ENCODE measurements at regions of chr10 and their contacts with region 1.

Region 1: DNA sequence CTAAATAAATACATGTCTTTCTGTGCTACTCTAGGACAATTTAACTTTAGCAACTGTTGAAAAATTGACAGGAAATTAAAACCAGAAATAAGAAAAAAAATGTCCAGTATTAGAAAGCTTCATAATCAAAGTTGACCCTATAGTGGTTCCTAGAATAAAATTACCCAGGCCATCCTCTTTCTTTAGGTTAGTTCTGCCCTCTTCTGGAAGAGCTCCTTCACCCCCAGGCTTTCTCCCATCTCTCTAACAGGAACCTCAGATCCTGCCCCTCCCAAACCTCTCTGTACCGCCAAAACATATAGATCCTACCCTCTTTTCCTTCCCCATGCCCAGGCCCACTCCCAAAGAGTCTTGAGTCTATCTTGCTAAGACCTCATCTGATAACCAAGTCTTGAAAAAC is 159.4 kb upstream of the CDK1 start:
- DNase-seq: no peak
- ATAC-seq: no peak
- H3K4me3 ChIP-seq: no peak overlapping the region
- H3K27ac ChIP-seq: no peak overlapping the region
- H3K4me1 ChIP-seq: no peaks in the 10 kb centered on the region
- H3K27me3 ChIP-seq: no peaks in the 10 kb centered on the region
- CTCF ChIP-seq: no peak
- EP300 ChIP-seq: no peak
- POLR2A ChIP-seq: no peak
- RAD21 ChIP-seq: no peak

Region 2: DNA sequence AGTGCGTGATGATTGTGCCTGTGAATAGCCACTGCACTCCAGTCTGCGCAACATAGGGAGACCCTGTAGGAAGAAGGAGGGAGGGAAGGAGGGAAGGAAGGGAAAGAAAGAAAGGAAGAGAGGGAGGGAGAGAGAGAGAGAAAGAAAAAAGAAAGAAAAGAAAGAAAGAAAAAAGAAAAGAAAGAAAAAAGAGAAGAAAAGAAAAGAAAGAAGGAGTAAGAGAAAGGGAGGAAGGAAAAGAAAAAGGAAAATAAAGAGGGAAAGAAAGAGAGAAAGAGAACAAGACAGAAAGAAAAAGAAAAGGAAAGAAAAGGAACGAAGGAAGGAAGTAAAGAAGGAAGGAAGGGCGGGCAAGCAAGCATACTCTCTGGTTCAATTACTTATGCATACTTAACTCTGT is 116.2 kb before region 1 on chr10:
- CTCF ChIA-PET with region 1: no interaction called
- POLR2A ChIA-PET with region 1: no interaction called
- RAD21 ChIA-PET with region 1: no interaction called
- SMC1A ChIA-PET with region 1: no interaction called
- in situ Hi-C with region 1: no loop called
- intact Hi-C with region 1: loop called (anchors 5 kb)
- DNase-seq: no peak
- ATAC-seq: no peak
- H3K4me3 ChIP-seq: no peak overlapping the region
- H3K27ac ChIP-seq: no peak overlapping the region
- H3K4me1 ChIP-seq: no peaks in the 10 kb centered on the region
- H3K27me3 ChIP-seq: no peaks in the 10 kb centered on the region
- CTCF ChIP-seq: no peak
- EP300 ChIP-seq: no peak
- POLR2A ChIP-seq: no peak
- RAD21 ChIP-seq: no peak

Measured in GM12878 (cell line).